GM12878 (cell line): ENCODE measurements at regions of chr11 and their contacts with region 1.

Region 1: GRCh38 chr11:4187055-4187988 is 92.7 kb downstream of the RRM1 start:
- DNase-seq: no peak
- ATAC-seq: peak; percentile 98
- H3K4me3 ChIP-seq: peak overlapping the region; percentile 64
- H3K27ac ChIP-seq: no peak overlapping the region
- H3K4me1 ChIP-seq: no peaks in the 10 kb centered on the region
- H3K27me3 ChIP-seq: no peaks in the 10 kb centered on the region; a peak in 1 of 4 replicates
- CTCF ChIP-seq: peak; percentile 72 to 91 (median 87)
- EP300 ChIP-seq: no peak
- POLR2A ChIP-seq: no peak
- RAD21 ChIP-seq: peak; percentile 88

Region 2: DNA sequence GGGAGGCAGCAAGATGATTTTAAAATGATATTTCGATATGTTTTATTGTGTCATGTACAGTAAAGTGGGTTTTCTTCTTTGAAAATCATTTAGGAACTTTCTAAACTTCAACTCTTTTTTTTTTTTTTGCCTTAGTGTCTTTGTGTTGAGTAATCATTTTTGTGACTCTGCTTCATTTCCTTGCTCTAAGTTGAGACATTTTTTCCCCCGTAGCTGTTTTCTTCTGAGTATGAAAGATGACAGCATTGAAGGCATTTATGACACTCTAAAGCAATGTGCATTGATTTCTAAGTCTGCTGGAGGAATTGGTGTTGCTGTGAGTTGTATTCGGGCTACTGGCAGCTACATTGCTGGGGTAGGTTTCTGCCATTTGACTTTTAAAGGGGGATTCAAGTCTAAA is 69.2 kb before region 1 on chr11:
- CTCF ChIA-PET with region 1: no interaction called
- POLR2A ChIA-PET with region 1: no interaction called
- RAD21 ChIA-PET with region 1: no interaction called
- SMC1A ChIA-PET with region 1: no interaction called
- in situ Hi-C with region 1: no loop called
- intact Hi-C with region 1: no loop called
- DNase-seq: no peak
- ATAC-seq: no peak
- H3K4me3 ChIP-seq: no peak overlapping the region
- H3K27ac ChIP-seq: no peak overlapping the region
- H3K4me1 ChIP-seq: no peaks in the 10 kb centered on the region
- H3K27me3 ChIP-seq: no peaks in the 10 kb centered on the region
- CTCF ChIP-seq: no peak
- EP300 ChIP-seq: no peak
- POLR2A ChIP-seq: no peak
- RAD21 ChIP-seq: no peak

Region 3: DNA sequence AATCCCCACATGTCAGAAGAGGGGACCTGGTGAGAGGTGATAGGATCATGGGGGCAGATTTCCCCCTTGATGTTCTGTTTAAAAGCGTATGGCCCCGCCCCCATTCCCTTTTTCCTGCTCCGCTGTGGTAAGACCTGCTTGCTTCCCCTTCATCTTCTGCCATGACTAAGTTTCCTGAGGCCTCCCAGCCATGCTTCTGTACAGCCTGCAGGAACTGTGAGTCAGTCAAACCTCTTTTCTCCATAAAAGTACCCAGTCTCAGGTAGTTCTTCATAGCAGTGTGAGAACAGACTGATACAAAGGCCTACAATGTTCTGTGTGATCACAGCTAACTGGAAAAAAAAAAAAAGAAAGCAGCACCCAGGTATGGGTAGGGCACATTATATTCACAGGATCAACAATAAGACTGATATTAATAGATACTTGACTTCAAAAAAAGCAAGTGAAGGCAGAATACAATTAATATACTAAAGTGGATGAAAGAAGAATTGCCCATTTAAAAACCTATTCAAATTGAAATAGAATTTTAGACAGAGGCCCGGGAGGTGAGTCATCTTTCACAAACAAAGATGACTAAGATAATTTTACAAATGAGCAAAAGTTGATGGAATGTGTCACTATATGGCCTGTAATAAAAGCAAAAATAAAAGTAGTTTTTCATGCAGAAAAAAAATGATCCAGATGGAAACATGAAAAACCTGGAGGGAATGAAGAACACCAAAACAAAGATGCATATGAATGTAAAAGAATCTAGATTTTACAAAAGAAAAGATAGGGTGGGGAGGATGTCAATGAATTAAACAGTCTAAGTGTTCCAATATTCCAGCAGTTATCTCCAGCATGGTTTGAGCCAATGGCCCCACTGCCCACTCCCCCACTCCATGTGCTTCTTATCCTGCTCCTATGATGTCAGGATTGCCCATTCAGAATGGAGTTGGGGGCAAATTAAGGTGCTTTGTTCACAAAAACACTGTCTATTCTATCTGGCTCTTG is 293.5 kb after region 1 on chr11:
- CTCF ChIA-PET with region 1: interaction called, 10 read pairs
- POLR2A ChIA-PET with region 1: no interaction called
- RAD21 ChIA-PET with region 1: no interaction called
- SMC1A ChIA-PET with region 1: no interaction called
- in situ Hi-C with region 1: no loop called
- intact Hi-C with region 1: no loop called
- DNase-seq: no peak
- ATAC-seq: no peak
- H3K4me3 ChIP-seq: no peak overlapping the region
- H3K27ac ChIP-seq: no peak overlapping the region
- H3K4me1 ChIP-seq: no peaks in the 10 kb centered on the region
- H3K27me3 ChIP-seq: no peaks in the 10 kb centered on the region; a peak in 1 of 4 replicates
- CTCF ChIP-seq: no peak
- EP300 ChIP-seq: no peak
- POLR2A ChIP-seq: no peak
- RAD21 ChIP-seq: no peak

Region 4: GRCh38 chr11:4496557-4497275 is 309.4 kb after region 1 on chr11:
- CTCF ChIA-PET with region 1: interaction called, 91 read pairs
- POLR2A ChIA-PET with region 1: no interaction called
- RAD21 ChIA-PET with region 1: interaction called, 46 read pairs
- SMC1A ChIA-PET with region 1: interaction called, 30 read pairs
- in situ Hi-C with region 1: loop called (anchors 5 kb)
- intact Hi-C with region 1: loop called (anchors 1 kb)
- DNase-seq: no peak
- ATAC-seq: no peak
- H3K4me3 ChIP-seq: no peak overlapping the region
- H3K27ac ChIP-seq: no peak overlapping the region
- H3K4me1 ChIP-seq: no peaks in the 10 kb centered on the region; the same call in 1 of the 2 replicates
- H3K27me3 ChIP-seq: no peaks in the 10 kb centered on the region
- CTCF ChIP-seq: no peak
- EP300 ChIP-seq: no peak
- POLR2A ChIP-seq: no peak
- RAD21 ChIP-seq: no peak

Region 5: DNA sequence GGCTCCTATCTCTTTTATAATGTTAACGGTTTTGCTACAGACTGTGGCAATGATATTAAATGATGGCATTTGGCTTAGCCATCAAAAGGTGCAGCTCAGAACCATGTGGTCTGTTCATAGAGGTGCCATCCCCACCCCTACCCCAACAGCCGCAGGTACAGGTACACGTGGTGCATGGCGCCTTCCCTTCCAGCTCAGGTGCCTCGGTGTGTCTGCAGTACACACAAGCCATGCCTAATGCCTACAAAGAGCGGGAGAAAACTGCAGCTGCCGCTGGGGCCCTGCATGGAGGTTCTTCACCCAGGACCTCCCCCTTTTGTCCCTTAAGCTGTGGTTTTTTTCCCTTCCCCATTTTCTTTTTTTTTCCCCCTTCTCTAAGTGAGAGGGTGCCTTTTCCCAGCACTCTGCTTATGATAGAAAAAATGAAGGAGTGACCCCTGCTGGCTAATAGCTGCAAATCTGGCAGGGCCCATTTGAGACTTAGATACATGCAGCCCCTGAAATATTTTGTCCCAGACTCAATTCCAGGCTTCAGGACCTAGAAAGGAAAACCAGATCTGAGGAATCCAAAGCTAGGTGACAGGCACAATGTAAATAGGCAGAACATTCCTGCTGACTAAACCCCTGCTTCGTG is 364.1 kb after region 1 on chr11:
- CTCF ChIA-PET with region 1: interaction called, 34 read pairs
- POLR2A ChIA-PET with region 1: no interaction called
- RAD21 ChIA-PET with region 1: interaction called, 4 read pairs
- SMC1A ChIA-PET with region 1: interaction called, 7 read pairs
- in situ Hi-C with region 1: no loop called
- intact Hi-C with region 1: loop called (anchors 1 kb)
- DNase-seq: no peak
- ATAC-seq: peak; percentile 56; the same call in 1 of the 3 replicates
- H3K4me3 ChIP-seq: no peak overlapping the region
- H3K27ac ChIP-seq: no peak overlapping the region
- H3K4me1 ChIP-seq: no peaks in the 10 kb centered on the region
- H3K27me3 ChIP-seq: no peaks in the 10 kb centered on the region; a peak in 1 of 4 replicates
- CTCF ChIP-seq: peak; percentile 30 to 56 (median 46); a peak in 5 of 6 replicates
- EP300 ChIP-seq: no peak
- POLR2A ChIP-seq: no peak
- RAD21 ChIP-seq: peak; percentile 27

Region 6: GRCh38 chr11:4636962-4637661 is 449.8 kb after region 1 on chr11 and contains the start of gene OR51D1:
- CTCF ChIA-PET with region 1: interaction called, 11 read pairs
- POLR2A ChIA-PET with region 1: no interaction called
- RAD21 ChIA-PET with region 1: interaction called, 6 read pairs
- SMC1A ChIA-PET with region 1: interaction called, 3 read pairs
- in situ Hi-C with region 1: no loop called
- intact Hi-C with region 1: loop called (anchors 5 kb)
- DNase-seq: peak; percentile 21
- ATAC-seq: peak; percentile 99
- H3K4me3 ChIP-seq: no peak within 1 kb of the TSS
- H3K27ac ChIP-seq: no peak within 1 kb of the TSS
- H3K4me1 ChIP-seq: no peaks in the 10 kb centered on the region
- H3K27me3 ChIP-seq: no peaks in the 10 kb centered on the region; a peak in 1 of 4 replicates
- CTCF ChIP-seq: peak; percentile 90 to 94 (median 91)
- EP300 ChIP-seq: no peak
- POLR2A ChIP-seq: no peak
- RAD21 ChIP-seq: peak; percentile 71
- polyA plus RNA-seq, gene OR51D1: not detected

Region 7: GRCh38 chr11:5380740-5381342 is 1193.5 kb after region 1 on chr11:
- CTCF ChIA-PET with region 1: no interaction called
- POLR2A ChIA-PET with region 1: no interaction called
- RAD21 ChIA-PET with region 1: no interaction called
- SMC1A ChIA-PET with region 1: no interaction called
- in situ Hi-C with region 1: no loop called
- intact Hi-C with region 1: loop called (anchors 5 kb)
- DNase-seq: no peak
- ATAC-seq: peak; percentile 98
- H3K4me3 ChIP-seq: no peak overlapping the region
- H3K27ac ChIP-seq: no peak overlapping the region
- H3K4me1 ChIP-seq: no peaks in the 10 kb centered on the region
- H3K27me3 ChIP-seq: no peaks in the 10 kb centered on the region
- CTCF ChIP-seq: peak; percentile 71 to 83 (median 80)
- EP300 ChIP-seq: no peak
- POLR2A ChIP-seq: no peak
- RAD21 ChIP-seq: peak; percentile 83